CD4-positive, alpha-beta memory T cell (primary cell): ENCODE measurements at regions of chr16 and their contacts with region 1.

Region 1: GRCh38 chr16:57648590-57649442 is 19.3 kb upstream of the ADGRG3 start:
- DNase-seq: peak; percentile 78 to 85 (median 80)
- H3K4me3 ChIP-seq: no peak overlapping the region
- H3K4me3 Mint-ChIP-seq: peak overlapping the region in 1 of 8 donors; percentile 3
- H3K27ac ChIP-seq: no peak overlapping the region
- H3K27ac Mint-ChIP-seq: peak overlapping the region in 4 of 7 donors; percentile 29 to 79 (median 64)
- H3K4me1 ChIP-seq: peaks cover 26% of the 10 kb centered on the region
- H3K4me1 Mint-ChIP-seq: peaks cover 15 to 32% (median 23%) of the 10 kb centered on the region in 4 donors
- H3K27me3 ChIP-seq: no peaks in the 10 kb centered on the region
- H3K27me3 Mint-ChIP-seq: no peaks in the 10 kb centered on the region

Region 2: GRCh38 chr16:57600048-57600835 is 48.6 kb before region 1 on chr16:
- CTCF ChIA-PET with region 1: interaction called, 357 read pairs
- POLR2A ChIA-PET with region 1: interaction called, 10 read pairs
- intact Hi-C with region 1: no loop called
- DNase-seq: no peak
- H3K4me3 ChIP-seq: no peak overlapping the region
- H3K4me3 Mint-ChIP-seq: peak overlapping the region in 1 of 8 donors; percentile 50
- H3K27ac ChIP-seq: no peak overlapping the region
- H3K27ac Mint-ChIP-seq: peak overlapping the region in 6 of 7 donors; percentile 10 to 68 (median 44)
- H3K4me1 ChIP-seq: peaks cover 43% of the 10 kb centered on the region
- H3K4me1 Mint-ChIP-seq: peaks cover 23 to 59% (median 36%) of the 10 kb centered on the region in 4 donors
- H3K27me3 ChIP-seq: no peaks in the 10 kb centered on the region
- H3K27me3 Mint-ChIP-seq: no peaks in the 10 kb centered on the region

Region 3: GRCh38 chr16:57609541-57610401 is 39.0 kb before region 1 on chr16:
- CTCF ChIA-PET with region 1: interaction called, 357 read pairs
- POLR2A ChIA-PET with region 1: interaction called, 3 read pairs
- intact Hi-C with region 1: no loop called
- DNase-seq: peak; percentile 60 to 67 (median 60)
- H3K4me3 ChIP-seq: peak overlapping the region; percentile 12 to 30
- H3K4me3 Mint-ChIP-seq: peak overlapping the region; percentile 1 to 87 (median 76)
- H3K27ac ChIP-seq: peak overlapping the region; percentile 23
- H3K27ac Mint-ChIP-seq: peak overlapping the region; percentile 67 to 92 (median 88)
- H3K4me1 ChIP-seq: peaks cover 26% of the 10 kb centered on the region
- H3K4me1 Mint-ChIP-seq: peaks cover 13 to 29% (median 20%) of the 10 kb centered on the region in 4 donors
- H3K27me3 ChIP-seq: no peaks in the 10 kb centered on the region
- H3K27me3 Mint-ChIP-seq: no peaks in the 10 kb centered on the region